IMR-90 (cell line): ENCODE measurements at regions of chr9 and their contacts with region 1.

Region 1: GRCh38 chr9:115672477-115673316 is 480.9 kb upstream of the PAPPA start:
- DNase-seq: peak; percentile 99
- ATAC-seq: peak; percentile 74
- H3K4me3 ChIP-seq: peak overlapping the region; percentile 10; the same call in 1 of the 2 replicates
- H3K27ac ChIP-seq: peak overlapping the region; percentile 99
- H3K4me1 ChIP-seq: peaks cover 35% of the 10 kb centered on the region
- H3K27me3 ChIP-seq: no peaks in the 10 kb centered on the region
- CTCF ChIP-seq: no peak
- POLR2A ChIP-seq: peak; percentile 73
- RAD21 ChIP-seq: peak; percentile 32; the same call in 1 of the 2 replicates

Region 2: DNA sequence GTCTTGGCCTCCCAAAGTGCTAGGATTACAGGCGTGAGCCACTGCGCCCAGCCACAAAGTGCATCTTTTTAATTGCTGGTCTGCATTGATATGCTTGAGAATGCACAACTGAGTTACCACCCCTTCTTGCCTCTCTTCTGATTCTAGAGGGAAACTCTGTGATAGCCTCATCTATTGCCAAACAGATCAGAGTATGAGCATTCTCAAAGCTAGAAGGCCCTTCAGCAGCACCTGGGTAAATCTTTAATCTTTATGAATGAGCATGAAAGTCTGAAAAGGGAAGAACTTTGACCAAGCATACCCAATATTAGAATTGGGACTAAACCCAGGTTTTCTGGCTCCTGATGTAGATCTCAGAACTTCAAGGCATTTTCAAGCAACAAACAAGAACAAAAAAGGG is 256.4 kb before region 1 on chr9:
- CTCF ChIA-PET with region 1: no interaction called
- POLR2A ChIA-PET with region 1: no interaction called
- dilution Hi-C with region 1: no loop called
- in situ Hi-C with region 1: no loop called
- intact Hi-C with region 1: no loop called
- DNase-seq: no peak
- ATAC-seq: no peak
- H3K4me3 ChIP-seq: no peak overlapping the region
- H3K27ac ChIP-seq: no peak overlapping the region
- H3K4me1 ChIP-seq: peaks cover 7% of the 10 kb centered on the region
- H3K27me3 ChIP-seq: no peaks in the 10 kb centered on the region
- CTCF ChIP-seq: no peak
- POLR2A ChIP-seq: no peak
- RAD21 ChIP-seq: no peak

Region 3: GRCh38 chr9:115649991-115650472 is 22.7 kb before region 1 on chr9:
- CTCF ChIA-PET with region 1: no interaction called
- POLR2A ChIA-PET with region 1: no interaction called
- dilution Hi-C with region 1: no loop called
- in situ Hi-C with region 1: no loop called
- intact Hi-C with region 1: loop called (anchors 1 kb)
- DNase-seq: peak; percentile 99
- ATAC-seq: peak; percentile 75
- H3K4me3 ChIP-seq: no peak overlapping the region
- H3K27ac ChIP-seq: peak overlapping the region; percentile 86
- H3K4me1 ChIP-seq: peaks cover 12% of the 10 kb centered on the region
- H3K27me3 ChIP-seq: no peaks in the 10 kb centered on the region
- CTCF ChIP-seq: no peak
- POLR2A ChIP-seq: peak; percentile 44
- RAD21 ChIP-seq: peak; percentile 35; the same call in 1 of the 2 replicates

Region 4: DNA sequence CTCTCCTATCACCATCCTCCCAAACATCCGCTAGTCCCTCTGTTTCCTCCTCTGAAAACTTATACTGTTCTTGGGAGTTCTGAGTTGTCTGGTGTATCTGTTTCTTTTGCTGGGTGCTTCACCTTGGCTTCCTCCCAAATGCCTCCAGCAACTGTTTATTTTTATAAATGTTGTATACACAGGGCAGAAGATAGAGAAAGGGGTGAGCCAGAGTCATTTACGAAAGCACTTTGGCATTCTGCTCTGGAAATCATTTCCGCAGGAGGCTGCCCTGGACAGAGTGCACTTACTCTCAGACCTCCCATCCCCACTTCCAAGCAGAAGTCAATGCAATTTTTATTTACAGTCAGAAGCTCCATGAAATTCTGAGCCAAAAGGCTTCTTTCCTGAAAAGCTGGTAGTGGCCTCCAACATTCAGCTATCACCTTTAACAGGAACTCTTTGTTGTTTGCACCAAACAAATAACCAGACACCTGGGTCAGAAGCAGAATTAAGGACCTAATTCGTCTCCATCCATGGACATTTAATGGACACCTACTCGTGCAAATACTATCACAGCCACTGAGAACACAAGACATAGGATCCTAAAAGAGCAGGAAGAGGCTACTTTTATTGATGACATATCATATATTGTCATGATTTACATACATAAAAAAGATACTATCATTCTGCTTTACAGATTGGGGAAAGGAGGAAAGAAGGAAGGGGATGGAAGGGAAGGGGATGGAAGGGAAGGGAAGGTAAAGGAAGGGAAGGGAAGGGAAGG is 251.4 kb after region 1 on chr9:
- CTCF ChIA-PET with region 1: no interaction called
- POLR2A ChIA-PET with region 1: no interaction called
- dilution Hi-C with region 1: no loop called
- in situ Hi-C with region 1: no loop called
- intact Hi-C with region 1: loop called (anchors 1 kb)
- DNase-seq: peak; percentile 99
- ATAC-seq: peak; percentile 99
- H3K4me3 ChIP-seq: no peak overlapping the region
- H3K27ac ChIP-seq: peak overlapping the region; percentile 100
- H3K4me1 ChIP-seq: peaks cover 26% of the 10 kb centered on the region
- H3K27me3 ChIP-seq: no peaks in the 10 kb centered on the region
- CTCF ChIP-seq: no peak
- POLR2A ChIP-seq: no peak
- RAD21 ChIP-seq: no peak; the same call in none of the 2 replicates

Region 5: DNA sequence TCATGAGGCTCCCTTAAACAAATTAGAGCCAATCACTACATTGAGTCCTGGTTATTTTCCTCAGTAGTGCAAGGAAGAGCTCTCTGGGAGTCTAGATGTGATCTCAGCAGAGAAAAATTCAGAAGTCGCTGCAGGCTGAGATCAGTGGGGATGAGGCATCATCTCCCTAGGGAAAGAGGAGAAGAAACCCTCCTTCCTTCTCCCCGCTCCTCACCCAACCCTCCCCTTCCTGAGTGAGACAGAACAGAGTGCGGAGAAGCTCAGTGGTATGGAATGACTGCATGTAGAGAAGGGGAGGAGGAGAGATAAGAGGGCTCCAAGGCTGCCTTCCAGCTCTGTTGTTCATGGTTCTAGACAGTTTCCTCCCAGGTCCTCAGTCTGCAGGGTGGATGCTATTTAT is 561.4 kb after region 1 on chr9:
- CTCF ChIA-PET with region 1: no interaction called
- POLR2A ChIA-PET with region 1: no interaction called
- dilution Hi-C with region 1: no loop called
- in situ Hi-C with region 1: no loop called
- intact Hi-C with region 1: loop called (anchors 2 kb)
- DNase-seq: peak; percentile 99
- ATAC-seq: peak; percentile 94
- H3K4me3 ChIP-seq: no peak overlapping the region
- H3K27ac ChIP-seq: peak overlapping the region; percentile 78
- H3K4me1 ChIP-seq: peaks cover 23% of the 10 kb centered on the region
- H3K27me3 ChIP-seq: no peaks in the 10 kb centered on the region
- CTCF ChIP-seq: no peak
- POLR2A ChIP-seq: peak; percentile 54; the same call in 1 of the 2 replicates
- RAD21 ChIP-seq: peak; percentile 23; the same call in 1 of the 2 replicates